Activated T-helper 1 cell treated with anti-CD3 and anti-CD28 coated beads, Interleukin-12 subunit alpha, Interleukin-12 subunit beta, Interleukin-2, Interleukin-4 antibody, amounts not matched to agents 30 ng/mL and 10 ng/mL and 1 ng/mL, durations not matched to agents 14 hours and 24 hours and 36 hours (primary cell): ENCODE measurements at regions of chrX and their contacts with region 1.

Region 1: GRCh38 chrX:135185795-135186443 is 14.7 kb upstream of the CT55 start:
- DNase-seq: peak; percentile 22
- H3K4me3 Mint-ChIP-seq: no peak overlapping the region
- H3K27ac Mint-ChIP-seq: no peak overlapping the region
- H3K4me1 Mint-ChIP-seq: no peaks in the 10 kb centered on the region
- H3K27me3 Mint-ChIP-seq: peaks cover 19% of the 10 kb centered on the region

Region 2: GRCh38 chrX:134969726-134970125 is 216.2 kb before region 1 on chrX:
- intact Hi-C with region 1: no loop called
- DNase-seq: no peak
- H3K4me3 Mint-ChIP-seq: no peak overlapping the region
- H3K27ac Mint-ChIP-seq: no peak overlapping the region
- H3K4me1 Mint-ChIP-seq: no peaks in the 10 kb centered on the region
- H3K27me3 Mint-ChIP-seq: peaks cover 10% of the 10 kb centered on the region

Region 3: GRCh38 chrX:135477576-135477975 is 291.7 kb after region 1 on chrX:
- intact Hi-C with region 1: loop called (anchors 1 kb)
- DNase-seq: peak; percentile 2
- H3K4me3 Mint-ChIP-seq: no peak overlapping the region
- H3K27ac Mint-ChIP-seq: no peak overlapping the region
- H3K4me1 Mint-ChIP-seq: peaks cover 5% of the 10 kb centered on the region
- H3K27me3 Mint-ChIP-seq: peaks cover 3% of the 10 kb centered on the region

Region 4: DNA sequence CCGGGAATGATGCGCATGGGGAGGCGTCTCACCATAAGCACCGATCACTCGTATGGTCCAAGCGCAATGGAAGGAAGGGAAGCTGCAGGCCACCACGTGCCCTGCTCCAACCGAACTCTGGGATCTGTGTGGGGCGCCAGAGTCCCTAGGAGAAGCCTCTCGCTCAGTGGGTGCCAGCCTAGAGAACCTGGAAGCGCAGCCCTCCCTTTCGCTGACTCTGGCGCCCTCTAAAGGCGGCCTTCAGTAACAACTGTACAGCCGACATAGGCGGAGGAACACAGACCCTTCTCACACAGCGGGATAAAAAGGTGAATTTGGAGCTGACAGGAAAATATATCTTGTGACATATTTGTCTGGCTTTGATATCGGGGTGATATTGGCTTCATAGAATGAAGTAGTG is 410.6 kb after region 1 on chrX:
- intact Hi-C with region 1: loop called (anchors 1 kb)
- DNase-seq: peak; percentile 14
- H3K4me3 Mint-ChIP-seq: no peak overlapping the region
- H3K27ac Mint-ChIP-seq: no peak overlapping the region
- H3K4me1 Mint-ChIP-seq: no peaks in the 10 kb centered on the region
- H3K27me3 Mint-ChIP-seq: peaks cover 24% of the 10 kb centered on the region

Region 5: DNA sequence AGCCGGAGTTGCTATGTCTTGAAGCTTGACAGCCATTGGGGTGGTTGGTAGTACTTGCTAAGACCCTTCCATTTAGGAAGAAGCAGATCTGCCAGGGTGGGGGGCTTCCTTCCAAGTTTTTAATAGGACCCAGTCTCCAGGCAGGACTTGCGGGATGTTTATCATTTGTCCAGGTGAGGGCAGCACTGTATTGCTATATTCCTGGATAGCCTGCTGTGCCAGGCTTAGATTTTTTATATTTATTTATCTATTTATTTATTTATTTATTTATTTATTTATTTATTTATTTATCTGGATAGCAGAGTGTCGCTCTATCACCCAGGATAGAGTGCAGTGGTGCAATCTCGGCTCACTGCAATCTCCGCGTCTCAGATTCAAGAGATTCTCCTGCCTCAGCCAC is 440.1 kb after region 1 on chrX:
- intact Hi-C with region 1: no loop called
- DNase-seq: no peak
- H3K4me3 Mint-ChIP-seq: no peak overlapping the region
- H3K27ac Mint-ChIP-seq: no peak overlapping the region
- H3K4me1 Mint-ChIP-seq: no peaks in the 10 kb centered on the region
- H3K27me3 Mint-ChIP-seq: no peaks in the 10 kb centered on the region